H1 (cell line): ENCODE measurements at regions of chr1 and their contacts with region 1.

Region 1: DNA sequence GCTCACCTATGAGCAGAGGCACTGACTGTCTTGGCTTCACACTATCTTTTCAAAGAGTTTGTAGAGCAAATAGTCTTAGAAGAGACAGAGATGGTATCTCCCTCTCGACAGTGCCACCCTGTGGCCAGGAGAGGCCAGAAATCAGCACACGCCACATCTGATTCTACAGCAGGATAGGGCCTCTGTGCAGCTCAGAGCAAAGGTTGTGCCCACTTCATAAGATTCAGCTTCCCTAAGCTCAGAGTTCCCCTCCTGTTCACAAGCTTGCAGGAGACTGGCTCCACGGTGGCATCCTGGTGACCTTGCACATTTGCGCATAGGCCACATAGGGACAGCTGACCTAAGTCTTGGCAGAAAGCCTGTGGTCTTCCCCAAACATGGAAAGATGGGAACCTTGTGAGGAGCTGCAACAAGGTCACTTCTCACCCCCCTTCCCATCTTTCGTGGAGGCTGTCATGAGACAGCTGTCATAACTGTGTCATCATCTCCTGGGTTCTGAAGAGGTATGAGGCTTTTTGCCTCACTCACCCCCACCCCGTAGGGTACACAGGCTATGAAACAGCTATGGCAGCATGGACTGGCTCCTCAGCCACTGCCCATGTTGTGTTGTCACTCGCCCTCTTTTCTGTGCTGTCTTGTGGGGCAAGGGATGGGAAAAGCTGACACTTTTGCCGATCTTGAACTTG is 3.0 kb downstream of the ITLN2 start:
- DNase-seq: peak; percentile 36 to 82
- H3K4me3 ChIP-seq: no peak overlapping the region
- H3K27ac ChIP-seq: no peak overlapping the region
- H3K4me1 ChIP-seq: peaks cover 0 to 9% (median 3%) of the 10 kb centered on the region in 4 experiments; a peak in 6 of 7 replicates
- H3K27me3 ChIP-seq: no peaks in the 10 kb centered on the region
- CTCF ChIP-seq: peak; percentile 85 to 97 (median 88)
- EP300 ChIP-seq: no peak
- POLR2A ChIP-seq: no peak
- RAD21 ChIP-seq: peak; percentile 77 to 87

Region 2: GRCh38 chr1:160726498-160727315 is 224.9 kb before region 1 on chr1:
- CTCF ChIA-PET with region 1: interaction called, 18 read pairs
- POLR2A ChIA-PET with region 1: no interaction called
- DNase-seq: peak; percentile 62 to 68
- H3K4me3 ChIP-seq: no peak overlapping the region
- H3K27ac ChIP-seq: peak overlapping the region; percentile 12; the same call in 1 of the 2 replicates
- H3K4me1 ChIP-seq: peaks cover 0 to 5% (median 2%) of the 10 kb centered on the region in 4 experiments; a peak in 3 of 7 replicates
- H3K27me3 ChIP-seq: no peaks in the 10 kb centered on the region
- CTCF ChIP-seq: peak; percentile 59 to 92 (median 81)
- EP300 ChIP-seq: no peak
- POLR2A ChIP-seq: no peak
- RAD21 ChIP-seq: peak; percentile 95 to 96

Region 3: GRCh38 chr1:160830321-160831153 is 121.0 kb before region 1 on chr1:
- CTCF ChIA-PET with region 1: interaction called, 219 read pairs
- POLR2A ChIA-PET with region 1: interaction called, 3 read pairs
- DNase-seq: peak in 1 of 2 experiments; percentile 91
- H3K4me3 ChIP-seq: no peak overlapping the region
- H3K27ac ChIP-seq: no peak overlapping the region
- H3K4me1 ChIP-seq: no peaks in the 10 kb centered on the region
- H3K27me3 ChIP-seq: no peaks in the 10 kb centered on the region
- CTCF ChIP-seq: peak; percentile 82 to 93 (median 89)
- EP300 ChIP-seq: no peak
- POLR2A ChIP-seq: no peak
- RAD21 ChIP-seq: peak; percentile 75 to 80

Region 4: GRCh38 chr1:160916666-160917065 is 34.9 kb before region 1 on chr1:
- CTCF ChIA-PET with region 1: interaction called, 43 read pairs
- POLR2A ChIA-PET with region 1: no interaction called
- DNase-seq: no peak
- H3K4me3 ChIP-seq: no peak overlapping the region
- H3K27ac ChIP-seq: no peak overlapping the region
- H3K4me1 ChIP-seq: peaks cover 0 to 4% (median 0%) of the 10 kb centered on the region in 4 experiments; a peak in 1 of 7 replicates
- H3K27me3 ChIP-seq: no peaks in the 10 kb centered on the region
- CTCF ChIP-seq: no peak
- EP300 ChIP-seq: no peak
- POLR2A ChIP-seq: no peak
- RAD21 ChIP-seq: no peak

Region 5: GRCh38 chr1:160963521-160963920 is 11.9 kb after region 1 on chr1:
- CTCF ChIA-PET with region 1: interaction called, 21 read pairs
- POLR2A ChIA-PET with region 1: interaction called, 3 read pairs
- DNase-seq: no peak
- H3K4me3 ChIP-seq: no peak overlapping the region
- H3K27ac ChIP-seq: no peak overlapping the region
- H3K4me1 ChIP-seq: no peaks in the 10 kb centered on the region
- H3K27me3 ChIP-seq: no peaks in the 10 kb centered on the region
- CTCF ChIP-seq: no peak
- EP300 ChIP-seq: no peak
- POLR2A ChIP-seq: no peak
- RAD21 ChIP-seq: no peak

Region 6: DNA sequence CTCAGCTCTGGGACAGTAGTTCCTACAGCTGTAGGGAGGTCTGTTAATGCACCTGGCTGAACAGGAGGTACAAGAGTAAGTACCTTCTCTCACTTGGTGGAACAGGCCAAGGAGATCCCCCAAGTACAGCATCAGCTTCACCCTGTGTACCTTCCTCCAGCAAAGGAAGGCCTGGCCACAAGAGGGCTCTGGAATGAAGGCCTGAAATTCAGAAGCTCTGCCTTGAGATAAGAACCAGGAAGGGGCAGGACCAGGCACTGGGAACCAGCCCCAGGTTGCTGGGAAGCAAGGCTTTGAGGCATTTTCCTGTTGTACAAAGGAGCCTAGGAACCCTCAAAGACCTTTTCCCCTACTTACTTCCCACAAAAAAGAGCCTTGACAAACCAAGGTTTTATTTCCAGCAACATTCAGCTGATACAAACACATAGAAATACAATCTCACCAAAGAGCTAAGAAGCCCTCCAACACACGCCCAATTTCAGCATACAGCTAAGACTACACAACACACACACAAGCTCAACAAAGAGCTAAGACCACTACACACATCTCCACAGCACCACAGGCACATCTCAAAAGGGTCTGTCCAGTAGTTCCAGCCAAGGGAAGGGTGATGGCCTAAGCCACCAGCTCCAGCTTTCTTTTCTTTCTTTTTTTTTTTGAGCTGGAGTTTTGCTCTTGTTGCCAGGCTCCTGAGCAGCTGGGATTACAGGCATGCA is 45.9 kb after region 1 on chr1:
- CTCF ChIA-PET with region 1: interaction called, 10 read pairs
- POLR2A ChIA-PET with region 1: interaction called, 3 read pairs
- DNase-seq: no peak
- H3K4me3 ChIP-seq: no peak overlapping the region
- H3K27ac ChIP-seq: no peak overlapping the region
- H3K4me1 ChIP-seq: peaks cover 0 to 3% (median 0%) of the 10 kb centered on the region in 4 experiments; a peak in 1 of 7 replicates
- H3K27me3 ChIP-seq: no peaks in the 10 kb centered on the region
- CTCF ChIP-seq: peak; percentile 57 to 77 (median 71)
- EP300 ChIP-seq: no peak
- POLR2A ChIP-seq: no peak
- RAD21 ChIP-seq: peak; percentile 63 to 80

Region 7: DNA sequence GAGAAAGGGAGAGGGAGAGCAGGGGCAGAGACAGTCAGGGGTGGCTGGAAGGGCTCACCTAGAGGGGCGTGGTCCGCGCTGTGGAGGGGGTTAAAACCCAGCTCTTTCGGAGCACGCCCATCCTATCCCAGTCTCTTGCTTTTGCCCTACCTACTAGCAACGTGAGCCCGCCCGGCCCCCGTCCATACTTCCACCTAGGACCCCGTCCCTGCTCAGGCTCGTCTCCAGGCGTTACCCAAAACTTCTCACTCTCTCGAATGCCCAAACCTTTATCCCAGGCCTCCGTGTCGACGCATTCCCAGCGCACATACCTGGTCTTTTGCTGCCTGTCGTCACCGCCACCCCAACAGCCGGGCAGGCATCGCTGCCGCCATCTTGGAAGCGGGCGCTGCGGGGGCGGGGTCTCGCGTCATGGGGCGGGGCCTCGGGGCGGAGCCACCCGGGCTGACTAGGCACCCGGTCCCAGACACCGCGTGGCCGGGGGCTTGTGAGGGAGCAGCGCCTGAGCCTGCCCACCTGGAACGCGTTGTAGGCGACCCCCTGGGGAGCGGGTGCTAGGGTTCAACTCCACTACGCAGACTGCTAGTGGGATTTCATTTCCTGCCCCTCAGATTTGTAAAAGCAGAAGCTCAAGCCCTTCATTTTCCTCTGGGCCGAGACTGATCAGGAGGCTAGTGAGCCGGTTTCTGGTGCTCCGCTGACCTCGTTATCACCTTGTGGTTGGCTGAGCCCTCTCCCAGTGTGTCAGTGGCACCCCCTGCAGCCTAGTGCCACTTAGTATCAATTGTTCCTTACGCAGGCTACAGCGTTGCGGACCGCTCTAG is 225.7 kb after region 1 on chr1 and contains the start of gene B4GALT3:
- CTCF ChIA-PET with region 1: no interaction called
- POLR2A ChIA-PET with region 1: no interaction called
- DNase-seq: peak in 1 of 2 experiments; percentile 100
- H3K4me3 ChIP-seq: peak within 1 kb of the TSS; percentile 66 to 96 (median 84)
- H3K27ac ChIP-seq: peak within 1 kb of the TSS; percentile 88
- H3K4me1 ChIP-seq: peaks cover 0 to 13% (median under 1%) of the 10 kb centered on the region in 4 experiments; a peak in 3 of 7 replicates
- H3K27me3 ChIP-seq: no peaks in the 10 kb centered on the region
- CTCF ChIP-seq: peak; percentile 32 to 40 (median 38); a peak in 3 of 4 replicates
- EP300 ChIP-seq: no peak
- POLR2A ChIP-seq: peak; percentile 89 to 97
- RAD21 ChIP-seq: peak in 1 of 2 experiments; percentile 23; a peak in 2 of 4 replicates
- total RNA-seq, gene B4GALT3: 42.3 and 45.5 TPM in 2 replicates